ENCODE measurements at regions of chr4 and their contacts with region 1.

Region 1: DNA sequence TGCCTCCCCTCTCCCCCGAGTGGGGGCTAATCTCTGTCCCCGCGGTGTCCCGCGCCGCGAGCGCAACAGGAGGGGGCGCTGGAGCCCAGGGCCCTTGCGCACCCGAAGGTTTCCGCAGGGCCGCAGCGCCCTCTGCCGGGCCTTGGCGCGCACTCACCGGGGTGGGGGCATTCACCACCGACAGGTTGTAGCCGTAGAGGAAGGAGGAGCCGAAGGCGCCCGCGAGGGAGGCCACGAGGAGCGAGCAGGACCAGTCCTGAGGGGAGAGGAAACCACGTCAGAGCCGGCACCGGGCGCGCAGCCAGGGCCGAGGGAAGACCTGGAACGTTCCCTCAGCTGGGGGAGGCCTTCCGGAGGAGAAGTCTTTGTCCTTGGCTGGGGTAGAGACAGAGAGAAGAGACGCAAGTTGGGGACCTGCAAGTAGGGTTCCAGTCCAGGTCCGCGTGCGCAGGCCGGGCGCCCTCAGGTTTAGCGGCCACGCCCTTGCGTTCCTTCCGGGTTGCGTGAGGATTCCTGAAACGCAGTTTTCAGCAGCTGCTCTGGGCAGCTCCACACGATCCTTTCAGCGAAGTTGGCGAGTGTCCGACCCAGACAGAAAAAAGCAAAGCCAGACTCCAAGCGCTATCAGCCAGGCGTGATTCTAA is 2.4 kb downstream of the SLC2A9 start:
- DNase-seq: peak; percentile 94
- H3K4me3 Mint-ChIP-seq: peak overlapping the region; percentile 87
- H3K27ac Mint-ChIP-seq: peak overlapping the region; percentile 95
- H3K4me1 Mint-ChIP-seq: peaks cover 17% of the 10 kb centered on the region
- H3K27me3 Mint-ChIP-seq: peaks cover 5% of the 10 kb centered on the region

Region 2: DNA sequence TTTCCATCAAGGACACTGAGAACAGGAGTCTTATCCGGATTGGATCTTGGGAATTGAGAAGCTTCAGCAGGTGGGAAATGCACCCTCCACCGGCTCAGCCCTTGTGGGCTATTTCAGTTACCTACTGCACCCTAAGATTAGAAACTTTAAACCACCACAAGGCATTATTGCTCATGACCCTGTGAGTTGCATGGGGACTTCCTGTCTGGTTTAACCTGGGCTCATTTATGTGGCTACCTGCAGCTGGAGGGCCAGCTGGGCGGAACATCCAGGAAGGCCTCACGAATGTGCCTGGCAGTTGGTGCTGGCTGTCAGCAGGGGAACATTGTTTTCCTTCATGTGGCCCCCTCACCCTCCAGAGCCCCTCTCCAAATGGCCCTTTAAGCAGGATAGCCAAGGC is 410.6 kb before region 1 on chr4:
- intact Hi-C with region 1: loop called (anchors 10 kb)
- DNase-seq: no peak
- H3K4me3 Mint-ChIP-seq: no peak overlapping the region
- H3K27ac Mint-ChIP-seq: no peak overlapping the region
- H3K4me1 Mint-ChIP-seq: peaks cover 35% of the 10 kb centered on the region
- H3K27me3 Mint-ChIP-seq: peaks cover 2% of the 10 kb centered on the region

Region 3: DNA sequence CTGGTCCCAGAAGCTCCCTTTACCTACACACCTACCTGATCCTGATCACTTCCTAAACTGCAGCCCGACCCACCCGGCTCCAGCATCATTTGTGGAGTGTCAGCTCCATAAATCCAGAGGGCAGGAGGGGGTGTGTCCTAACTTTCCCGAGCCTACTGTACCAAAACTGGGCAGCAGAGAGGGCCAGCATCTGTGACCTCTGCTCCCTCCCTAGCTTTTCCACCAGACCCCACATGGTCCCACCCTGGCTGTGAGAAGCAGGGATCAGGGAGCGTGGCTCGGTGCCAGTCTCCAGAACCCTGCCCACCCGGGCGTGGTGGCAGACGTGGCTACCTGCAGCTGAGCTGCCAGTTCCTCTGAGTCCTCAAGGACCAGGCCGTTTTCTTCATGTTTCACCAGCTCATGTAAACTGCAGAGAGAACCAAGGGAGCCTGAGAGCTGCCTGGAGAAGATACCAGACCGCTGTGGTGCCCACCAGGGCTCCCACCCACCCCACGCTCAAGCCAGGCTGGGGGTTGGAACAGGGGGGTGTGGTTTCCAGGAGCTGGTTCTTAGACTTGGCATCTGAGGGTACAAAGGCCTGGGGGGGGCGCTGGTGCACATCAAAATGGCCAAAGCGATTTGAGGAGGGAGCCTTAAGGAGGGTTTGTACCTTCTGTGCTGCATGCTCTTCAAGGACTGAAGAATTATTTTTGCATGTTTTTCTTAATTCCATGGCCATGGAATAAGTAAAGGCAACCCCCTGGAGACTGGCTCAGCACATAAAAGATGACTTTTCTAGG is 314.2 kb before region 1 on chr4:
- intact Hi-C with region 1: loop called (anchors 1 kb)
- DNase-seq: no peak
- H3K4me3 Mint-ChIP-seq: no peak overlapping the region
- H3K27ac Mint-ChIP-seq: no peak overlapping the region
- H3K4me1 Mint-ChIP-seq: peaks cover 10% of the 10 kb centered on the region
- H3K27me3 Mint-ChIP-seq: no peaks in the 10 kb centered on the region

Region 4: GRCh38 chr4:9825049-9825448 is 193.9 kb before region 1 on chr4:
- intact Hi-C with region 1: loop called (anchors 5 kb)
- DNase-seq: peak; percentile 21
- H3K4me3 Mint-ChIP-seq: no peak overlapping the region
- H3K27ac Mint-ChIP-seq: no peak overlapping the region
- H3K4me1 Mint-ChIP-seq: peaks cover 14% of the 10 kb centered on the region
- H3K27me3 Mint-ChIP-seq: peaks cover 19% of the 10 kb centered on the region

Region 5: GRCh38 chr4:9952415-9952950 is 66.5 kb before region 1 on chr4:
- intact Hi-C with region 1: no loop called
- DNase-seq: no peak
- H3K4me3 Mint-ChIP-seq: no peak overlapping the region
- H3K27ac Mint-ChIP-seq: no peak overlapping the region
- H3K4me1 Mint-ChIP-seq: no peaks in the 10 kb centered on the region
- H3K27me3 Mint-ChIP-seq: peaks cover 10% of the 10 kb centered on the region

Region 6: GRCh38 chr4:10403633-10404445 is 384.9 kb after region 1 on chr4:
- intact Hi-C with region 1: loop called (anchors 1 kb)
- DNase-seq: no peak
- H3K4me3 Mint-ChIP-seq: no peak overlapping the region
- H3K27ac Mint-ChIP-seq: no peak overlapping the region
- H3K4me1 Mint-ChIP-seq: no peaks in the 10 kb centered on the region
- H3K27me3 Mint-ChIP-seq: peaks cover 5% of the 10 kb centered on the region

Region 7: GRCh38 chr4:10524196-10524833 is 505.4 kb after region 1 on chr4:
- intact Hi-C with region 1: no loop called
- DNase-seq: no peak
- H3K4me3 Mint-ChIP-seq: no peak overlapping the region
- H3K27ac Mint-ChIP-seq: no peak overlapping the region
- H3K4me1 Mint-ChIP-seq: no peaks in the 10 kb centered on the region
- H3K27me3 Mint-ChIP-seq: peaks cover 5% of the 10 kb centered on the region